Transverse colon (tissue), 4 donors: ENCODE measurements at regions of chrX and their contacts with region 1.

Region 1: GRCh38 chrX:44874420-44875184 is 1.6 kb downstream of the KDM6A start:
- DNase-seq: peak; percentile 42
- H3K4me3 ChIP-seq: peak overlapping the region; percentile 89 to 97 (median 96)
- H3K27ac ChIP-seq: peak overlapping the region; percentile 98 to 100 (median 100)
- H3K4me1 ChIP-seq: peaks cover 5 to 23% (median 12%) of the 10 kb centered on the region in 4 donors
- H3K27me3 ChIP-seq: no peaks in the 10 kb centered on the region
- CTCF ChIP-seq: no peak
- EP300 ChIP-seq: no peak
- POLR2A ChIP-seq: no peak

Region 2: DNA sequence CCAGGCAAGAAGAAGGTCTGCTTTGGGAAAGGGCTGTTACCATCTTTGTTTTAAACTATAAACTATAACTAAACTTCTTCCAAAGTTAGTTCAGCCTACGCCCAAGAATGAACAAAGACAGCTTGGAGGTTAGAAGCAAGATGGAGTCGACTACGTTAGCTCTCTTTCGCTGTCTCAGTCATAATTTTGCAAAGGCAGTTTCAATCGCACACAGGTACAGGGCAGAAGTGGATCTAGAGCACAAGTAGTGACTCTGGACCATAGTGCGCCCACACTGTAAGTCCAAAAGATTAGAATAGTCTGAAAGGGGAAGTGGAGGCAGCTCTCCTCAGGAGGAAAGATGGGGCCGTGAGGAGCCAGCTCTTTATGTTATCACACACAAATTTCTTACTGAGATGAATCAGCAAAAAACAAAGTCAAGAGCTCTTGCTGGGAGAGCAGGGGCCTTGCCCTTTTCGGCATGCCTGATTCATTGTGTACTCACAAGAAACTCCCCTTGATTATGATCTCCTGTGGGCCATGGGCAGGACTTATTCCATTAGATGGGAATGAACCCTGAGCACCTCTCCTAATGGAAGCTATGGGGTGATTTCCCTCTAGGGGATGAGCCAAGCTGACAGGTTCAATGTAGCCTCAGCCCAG is 390.5 kb before region 1 on chrX:
- in situ Hi-C with region 1: no loop called
- intact Hi-C with region 1: no loop called
- DNase-seq: no peak
- H3K4me3 ChIP-seq: no peak overlapping the region
- H3K27ac ChIP-seq: no peak overlapping the region
- H3K4me1 ChIP-seq: no peaks in the 10 kb centered on the region
- H3K27me3 ChIP-seq: no peaks in the 10 kb centered on the region
- CTCF ChIP-seq: no peak
- EP300 ChIP-seq: no peak
- POLR2A ChIP-seq: no peak

Region 3: GRCh38 chrX:44974422-44974821 is 99.8 kb after region 1 on chrX:
- in situ Hi-C with region 1: no loop called
- intact Hi-C with region 1: no loop called
- DNase-seq: no peak
- H3K4me3 ChIP-seq: no peak overlapping the region
- H3K27ac ChIP-seq: no peak overlapping the region
- H3K4me1 ChIP-seq: peaks cover 0 to 7% (median 2%) of the 10 kb centered on the region in 4 donors
- H3K27me3 ChIP-seq: no peaks in the 10 kb centered on the region
- CTCF ChIP-seq: no peak
- EP300 ChIP-seq: no peak
- POLR2A ChIP-seq: no peak

Region 4: DNA sequence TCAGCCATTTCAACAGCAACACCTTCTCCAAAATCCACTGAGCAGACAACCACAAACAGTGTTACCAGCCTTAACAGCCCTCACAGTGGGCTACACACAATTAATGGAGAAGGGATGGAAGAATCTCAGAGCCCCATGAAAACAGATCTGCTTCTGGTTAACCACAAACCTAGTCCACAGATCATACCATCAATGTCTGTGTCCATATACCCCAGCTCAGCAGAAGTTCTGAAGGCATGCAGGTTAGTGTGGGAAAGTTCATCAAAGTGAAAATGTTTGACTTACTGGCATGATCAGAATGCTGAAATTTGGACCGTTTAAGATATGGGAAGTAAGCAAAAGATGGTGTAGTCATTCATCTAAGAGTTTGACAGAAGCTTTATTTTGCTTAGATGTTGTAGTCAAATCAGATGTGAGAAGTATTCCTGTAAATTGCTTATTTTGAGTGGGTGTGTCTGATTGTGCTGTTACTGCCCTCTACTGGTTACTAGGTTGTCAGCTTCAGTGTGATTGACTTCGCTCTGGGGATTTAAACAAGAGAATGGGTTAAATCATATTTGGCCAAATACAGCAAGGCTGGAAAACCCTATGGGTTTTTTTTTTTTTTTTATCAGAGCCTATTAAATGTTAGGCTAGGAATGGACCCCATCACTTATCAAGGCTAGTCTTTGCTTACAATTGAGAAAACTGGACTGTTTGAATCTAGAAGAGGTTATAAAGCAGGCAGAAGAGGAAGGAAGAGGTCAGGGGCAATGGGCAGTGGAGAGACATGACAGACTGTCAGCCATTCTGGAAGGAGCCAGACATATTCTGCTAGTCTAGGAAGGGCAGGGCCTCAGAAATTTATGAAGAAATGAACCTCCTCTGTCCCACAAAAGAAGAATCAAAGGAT is 195.8 kb after region 1 on chrX:
- in situ Hi-C with region 1: loop called in 2 of 4 experiments (anchors 25 kb)
- intact Hi-C with region 1: no loop called
- DNase-seq: no peak
- H3K4me3 ChIP-seq: no peak overlapping the region
- H3K27ac ChIP-seq: no peak overlapping the region
- H3K4me1 ChIP-seq: no peaks in the 10 kb centered on the region
- H3K27me3 ChIP-seq: no peaks in the 10 kb centered on the region
- CTCF ChIP-seq: peak; percentile 26 to 63 (median 48)
- EP300 ChIP-seq: no peak
- POLR2A ChIP-seq: no peak